ENCODE measurements at regions of chr7 and their contacts with region 1.

Region 1: GRCh38 chr7:50335795-50336754 is 31.6 kb downstream of the IKZF1 start:
- DNase-seq: peak; percentile 71 to 93 (median 77)
- H3K4me3 ChIP-seq: peak overlapping the region; percentile 32
- H3K4me3 Mint-ChIP-seq: no peak overlapping the region
- H3K27ac ChIP-seq: peak overlapping the region; percentile 49
- H3K27ac Mint-ChIP-seq: no peak overlapping the region
- H3K4me1 ChIP-seq: peaks cover 100% of the 10 kb centered on the region
- H3K4me1 Mint-ChIP-seq: peaks cover 0 to under 1% (median 0%) of the 10 kb centered on the region in 3 donors
- H3K27me3 ChIP-seq: no peaks in the 10 kb centered on the region
- H3K27me3 Mint-ChIP-seq: no peaks in the 10 kb centered on the region

Region 2: GRCh38 chr7:50153148-50153547 is 182.9 kb before region 1 on chr7:
- CTCF ChIA-PET with region 1: no interaction called
- POLR2A ChIA-PET with region 1: no interaction called
- DNase-seq: no peak
- H3K4me3 ChIP-seq: no peak overlapping the region
- H3K4me3 Mint-ChIP-seq: no peak overlapping the region
- H3K27ac ChIP-seq: no peak overlapping the region
- H3K27ac Mint-ChIP-seq: no peak overlapping the region
- H3K4me1 ChIP-seq: peaks cover 27% of the 10 kb centered on the region
- H3K4me1 Mint-ChIP-seq: peaks cover 26 to 44% (median 38%) of the 10 kb centered on the region in 3 donors
- H3K27me3 ChIP-seq: no peaks in the 10 kb centered on the region
- H3K27me3 Mint-ChIP-seq: no peaks in the 10 kb centered on the region

Region 3: GRCh38 chr7:50217821-50218281 is 118.2 kb before region 1 on chr7:
- CTCF ChIA-PET with region 1: no interaction called
- POLR2A ChIA-PET with region 1: no interaction called
- DNase-seq: no peak
- H3K4me3 ChIP-seq: no peak overlapping the region
- H3K4me3 Mint-ChIP-seq: no peak overlapping the region
- H3K27ac ChIP-seq: no peak overlapping the region
- H3K27ac Mint-ChIP-seq: peak overlapping the region in 1 of 8 donors; percentile 41
- H3K4me1 ChIP-seq: peaks cover 28% of the 10 kb centered on the region
- H3K4me1 Mint-ChIP-seq: peaks cover 20 to 38% (median 26%) of the 10 kb centered on the region in 3 donors
- H3K27me3 ChIP-seq: no peaks in the 10 kb centered on the region
- H3K27me3 Mint-ChIP-seq: peaks cover 0 to 2% of the 10 kb centered on the region in 2 donors

Region 4: GRCh38 chr7:50293509-50294179 is 42.4 kb before region 1 on chr7:
- CTCF ChIA-PET with region 1: no interaction called
- POLR2A ChIA-PET with region 1: no interaction called
- DNase-seq: no peak
- H3K4me3 ChIP-seq: no peak overlapping the region
- H3K4me3 Mint-ChIP-seq: no peak overlapping the region
- H3K27ac ChIP-seq: no peak overlapping the region
- H3K27ac Mint-ChIP-seq: peak overlapping the region in 1 of 8 donors; percentile 20
- H3K4me1 ChIP-seq: no peaks in the 10 kb centered on the region
- H3K4me1 Mint-ChIP-seq: peaks cover 8 to 39% (median 35%) of the 10 kb centered on the region in 3 donors
- H3K27me3 ChIP-seq: no peaks in the 10 kb centered on the region
- H3K27me3 Mint-ChIP-seq: peaks cover 0 to 2% of the 10 kb centered on the region in 2 donors

Region 5: DNA sequence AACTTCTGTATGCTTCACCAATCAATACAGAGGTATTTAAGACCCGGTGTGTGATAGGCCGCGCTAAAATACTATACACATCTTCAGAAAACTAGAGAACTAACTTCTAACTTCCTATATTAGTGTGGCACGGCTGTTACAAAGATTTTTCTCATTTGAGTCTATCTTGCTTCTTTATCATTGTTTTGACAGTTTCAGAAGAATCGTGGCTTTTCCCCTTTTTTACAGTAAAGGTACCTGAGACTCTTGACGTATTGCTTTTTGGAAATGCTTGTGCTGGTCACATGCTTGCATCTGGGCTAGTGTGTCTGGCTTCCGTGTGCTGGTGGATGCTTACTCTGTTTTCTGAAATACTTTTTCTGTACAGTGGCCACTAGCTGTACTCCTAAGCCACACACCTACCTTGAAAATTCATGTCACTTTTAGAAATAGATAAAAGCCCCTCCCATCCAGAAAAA is 18.8 kb before region 1 on chr7:
- CTCF ChIA-PET with region 1: interaction called, 815 read pairs
- POLR2A ChIA-PET with region 1: interaction called, 28 read pairs
- DNase-seq: peak in 3 of 5 donors; percentile 74 to 85 (median 74)
- H3K4me3 ChIP-seq: peak overlapping the region; percentile 57
- H3K4me3 Mint-ChIP-seq: peak overlapping the region; percentile 79 to 100 (median 98)
- H3K27ac ChIP-seq: peak overlapping the region; percentile 66
- H3K27ac Mint-ChIP-seq: peak overlapping the region; percentile 92 to 99 (median 98)
- H3K4me1 ChIP-seq: peaks cover 98% of the 10 kb centered on the region
- H3K4me1 Mint-ChIP-seq: peaks cover 95 to 100% (median 99%) of the 10 kb centered on the region in 3 donors
- H3K27me3 ChIP-seq: no peaks in the 10 kb centered on the region
- H3K27me3 Mint-ChIP-seq: no peaks in the 10 kb centered on the region

Region 6: DNA sequence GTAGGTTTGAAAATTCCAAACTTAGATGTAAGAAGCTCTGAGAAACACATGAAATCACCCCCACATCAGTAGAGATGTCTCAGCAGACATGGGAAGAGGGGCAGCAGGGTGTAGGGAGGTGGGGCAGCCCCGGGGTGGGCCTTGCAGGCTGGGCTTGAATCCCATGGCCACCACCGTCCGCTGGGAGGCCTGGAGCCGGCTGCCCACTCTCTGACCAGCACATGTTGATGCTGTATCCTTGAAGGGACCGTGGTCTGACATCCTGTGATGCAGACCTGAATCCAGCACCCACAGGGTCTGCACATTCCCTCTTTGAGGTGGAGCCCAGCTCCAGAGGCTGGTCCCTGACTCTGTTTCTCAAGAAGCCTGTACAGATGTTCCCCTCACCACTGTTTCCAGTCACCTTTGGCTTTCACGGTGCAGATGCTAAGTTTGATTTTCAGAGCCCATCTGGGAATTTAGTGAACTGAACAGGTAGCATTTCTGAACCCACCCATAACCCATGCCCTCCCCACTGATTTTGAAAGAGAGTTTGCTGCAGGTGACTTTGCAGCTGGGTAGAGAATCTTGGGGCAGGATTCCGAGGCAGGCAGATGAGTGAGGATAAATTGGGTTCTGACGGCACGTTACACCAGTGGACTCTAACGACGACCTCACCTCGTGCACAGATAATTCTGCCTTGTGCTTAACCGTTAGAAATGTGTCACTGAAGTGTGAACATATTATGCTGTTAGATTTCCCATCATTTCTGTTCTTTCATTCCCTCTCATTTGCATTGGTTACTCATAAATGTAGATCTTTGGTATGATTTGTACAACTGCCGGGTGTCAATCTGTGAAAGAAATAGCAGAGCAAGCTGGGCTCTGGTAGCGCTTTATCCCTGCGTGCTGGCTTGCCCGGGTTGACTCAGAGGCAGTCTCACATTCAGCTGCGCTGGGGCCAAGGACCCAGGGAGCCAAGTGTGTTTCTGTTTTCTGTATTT is 14.2 kb after region 1 on chr7:
- CTCF ChIA-PET with region 1: interaction called, 62 read pairs
- POLR2A ChIA-PET with region 1: interaction called, 31 read pairs
- DNase-seq: peak in 4 of 5 donors; percentile 46 to 80 (median 58)
- H3K4me3 ChIP-seq: peak overlapping the region; percentile 44
- H3K4me3 Mint-ChIP-seq: peak overlapping the region; percentile 59 to 90 (median 68)
- H3K27ac ChIP-seq: peak overlapping the region; percentile 73
- H3K27ac Mint-ChIP-seq: peak overlapping the region in 7 of 8 donors; percentile 92 to 100 (median 96)
- H3K4me1 ChIP-seq: peaks cover 97% of the 10 kb centered on the region
- H3K4me1 Mint-ChIP-seq: peaks cover 97 to 100% (median 100%) of the 10 kb centered on the region in 3 donors
- H3K27me3 ChIP-seq: no peaks in the 10 kb centered on the region
- H3K27me3 Mint-ChIP-seq: no peaks in the 10 kb centered on the region

Region 7: GRCh38 chr7:50369143-50370026 is 33.3 kb after region 1 on chr7:
- CTCF ChIA-PET with region 1: interaction called, 23 read pairs
- POLR2A ChIA-PET with region 1: interaction called, 136 read pairs
- DNase-seq: peak in 4 of 5 donors; percentile 44 to 82 (median 72)
- H3K4me3 ChIP-seq: peak overlapping the region; percentile 27
- H3K4me3 Mint-ChIP-seq: peak overlapping the region; percentile 7 to 72 (median 62)
- H3K27ac ChIP-seq: no peak overlapping the region
- H3K27ac Mint-ChIP-seq: peak overlapping the region in 7 of 8 donors; percentile 87 to 100 (median 93)
- H3K4me1 ChIP-seq: peaks cover 97% of the 10 kb centered on the region
- H3K4me1 Mint-ChIP-seq: peaks cover 94 to 100% (median 98%) of the 10 kb centered on the region in 3 donors
- H3K27me3 ChIP-seq: no peaks in the 10 kb centered on the region
- H3K27me3 Mint-ChIP-seq: no peaks in the 10 kb centered on the region